Activated CD4-positive, alpha-beta T cell treated with anti-CD3 and anti-CD28 coated beads for 36 hours (primary cell): ENCODE measurements at regions of chr10 and their contacts with region 1.

Region 1: DNA sequence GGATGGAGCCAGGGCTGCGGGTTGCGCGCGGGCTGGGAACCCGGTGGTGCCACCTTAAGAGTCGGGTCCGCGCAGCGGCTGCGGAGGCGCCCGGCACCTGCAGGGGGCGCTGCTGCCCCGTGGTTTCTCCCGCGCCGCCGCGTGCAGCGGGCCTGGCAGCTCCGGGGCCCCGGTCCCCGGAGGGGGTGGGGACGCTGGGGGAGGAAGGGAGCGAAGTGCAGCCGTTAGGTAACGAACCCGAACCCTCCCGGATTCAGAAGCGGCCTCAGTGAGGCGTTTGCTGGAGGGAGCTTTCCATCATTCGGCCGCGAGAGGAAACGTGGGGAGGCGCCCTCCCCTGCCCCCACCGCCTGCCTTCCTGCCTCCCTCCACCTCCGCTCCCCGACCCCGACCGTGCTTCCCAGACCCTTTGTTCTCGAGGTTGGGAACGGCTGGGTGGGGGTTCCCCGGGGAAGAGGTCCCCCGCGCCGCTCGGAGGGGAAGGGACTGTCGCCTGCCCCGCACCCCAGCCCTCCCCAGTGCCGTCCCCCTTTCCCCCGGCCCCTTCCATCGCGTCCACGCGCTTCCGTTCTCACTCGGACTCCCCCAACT is 29.6 kb downstream of the SKIDA1 start:
- DNase-seq: peak; percentile 92
- ATAC-seq: peak; percentile 86
- H3K4me3 Mint-ChIP-seq: peak overlapping the region; percentile 76
- H3K27ac Mint-ChIP-seq: no peak overlapping the region
- H3K4me1 Mint-ChIP-seq: peaks cover 17% of the 10 kb centered on the region
- H3K27me3 Mint-ChIP-seq: peaks cover 47% of the 10 kb centered on the region

Region 2: DNA sequence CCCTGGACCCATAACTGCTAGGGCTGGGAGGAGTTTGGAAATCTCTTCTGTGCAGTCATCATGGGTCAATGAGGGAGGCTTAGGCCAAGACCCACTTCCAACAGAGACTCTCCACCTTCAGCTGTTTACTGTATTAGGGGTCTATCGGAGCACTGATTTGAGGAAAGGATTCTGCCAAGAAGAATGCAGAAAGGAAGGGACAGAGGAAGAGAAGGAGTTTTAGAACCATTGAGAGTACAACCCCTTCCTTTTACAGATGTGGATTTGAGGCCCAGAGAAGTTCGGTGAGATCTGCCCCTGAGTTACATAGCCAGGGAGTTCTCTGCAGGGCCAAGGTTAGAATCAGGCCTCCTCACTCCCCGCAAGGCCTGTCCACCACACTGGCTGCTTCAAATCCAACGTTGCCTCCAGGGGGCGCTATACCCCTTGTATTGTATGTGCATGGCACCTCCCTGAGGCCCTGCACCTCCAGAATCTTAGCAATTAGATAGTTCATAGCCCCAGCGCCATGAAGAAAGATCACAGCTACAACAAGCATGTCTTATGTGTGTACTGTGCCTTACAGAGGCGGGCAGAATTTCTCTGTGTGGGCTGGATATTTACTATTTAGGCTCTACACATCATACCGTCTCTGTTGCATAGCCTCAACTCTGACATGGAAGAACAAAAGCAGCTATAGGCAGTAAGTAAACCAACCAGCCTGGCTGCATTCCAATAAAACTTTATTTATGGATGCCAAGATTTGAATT is 217.2 kb before region 1 on chr10:
- CTCF ChIA-PET with region 1: no interaction called
- POLR2A ChIA-PET with region 1: no interaction called
- intact Hi-C with region 1: loop called (anchors 1 to 2 kb)
- DNase-seq: peak; percentile 92
- ATAC-seq: peak; percentile 92
- H3K4me3 Mint-ChIP-seq: no peak overlapping the region
- H3K27ac Mint-ChIP-seq: no peak overlapping the region
- H3K4me1 Mint-ChIP-seq: no peaks in the 10 kb centered on the region
- H3K27me3 Mint-ChIP-seq: peaks cover 2% of the 10 kb centered on the region

Region 3: DNA sequence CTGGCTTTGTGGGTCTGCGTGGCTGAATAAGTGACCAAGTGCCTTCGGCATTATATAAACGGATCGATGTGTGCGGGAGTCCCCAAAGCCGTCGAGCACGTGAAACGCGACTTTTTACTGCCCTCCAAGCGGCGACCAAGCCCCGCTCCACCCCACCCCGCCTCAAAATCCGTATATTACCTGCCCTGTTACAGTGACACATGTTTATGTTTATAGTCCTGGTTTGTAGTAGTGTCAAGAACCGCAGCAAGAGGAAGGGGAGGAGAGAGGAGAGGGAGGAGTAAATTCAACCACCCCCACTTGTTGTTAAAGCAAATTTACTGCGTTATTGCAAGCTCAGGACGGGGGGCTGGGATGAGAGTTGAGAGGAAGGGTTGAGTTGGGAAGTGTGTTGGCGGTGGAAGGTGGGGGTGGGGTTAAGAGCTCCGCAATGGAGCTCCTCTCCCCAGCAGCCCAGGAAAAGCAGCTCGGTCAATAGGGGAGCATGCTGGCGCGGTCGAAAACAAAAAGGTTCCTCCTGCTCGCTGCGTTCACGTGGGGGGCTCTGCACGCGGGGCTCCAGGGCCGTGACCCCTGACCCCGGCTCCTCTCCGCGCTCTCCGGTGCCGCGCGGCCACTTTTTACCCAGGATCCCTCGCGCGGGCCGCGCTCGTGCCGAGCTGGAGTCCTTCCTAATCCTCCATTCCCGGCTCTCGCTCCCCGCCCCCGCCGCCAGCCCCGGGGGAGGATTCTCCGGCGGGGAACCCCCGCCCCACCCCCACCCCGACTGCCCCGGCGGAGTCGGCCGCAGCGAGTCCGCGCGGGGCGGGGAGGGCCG is 29.7 kb after region 1 on chr10 and contains the start of gene SKIDA1:
- CTCF ChIA-PET with region 1: interaction called, 8 read pairs
- POLR2A ChIA-PET with region 1: interaction called, 5 read pairs
- intact Hi-C with region 1: loop called in 1 of 2 experiments (anchors 2 kb)
- DNase-seq: peak; percentile 81
- ATAC-seq: peak; percentile 71
- H3K4me3 Mint-ChIP-seq: peak within 1 kb of the TSS; percentile 80
- H3K27ac Mint-ChIP-seq: peak within 1 kb of the TSS; percentile 96
- H3K4me1 Mint-ChIP-seq: peaks cover 24% of the 10 kb centered on the region
- H3K27me3 Mint-ChIP-seq: peaks cover 17% of the 10 kb centered on the region
- total RNA-seq, gene SKIDA1: 0.32 to 0.54 TPM

Region 4: GRCh38 chr10:21675157-21675796 is 179.4 kb after region 1 on chr10:
- CTCF ChIA-PET with region 1: interaction called, 4 read pairs
- POLR2A ChIA-PET with region 1: no interaction called
- intact Hi-C with region 1: loop called in 1 of 2 experiments (anchors 2 kb)
- DNase-seq: peak; percentile 52
- ATAC-seq: peak; percentile 66
- H3K4me3 Mint-ChIP-seq: no peak overlapping the region
- H3K27ac Mint-ChIP-seq: no peak overlapping the region
- H3K4me1 Mint-ChIP-seq: peaks cover 1% of the 10 kb centered on the region
- H3K27me3 Mint-ChIP-seq: no peaks in the 10 kb centered on the region

Region 5: GRCh38 chr10:21831986-21832820 is 336.4 kb after region 1 on chr10:
- CTCF ChIA-PET with region 1: no interaction called
- POLR2A ChIA-PET with region 1: no interaction called
- intact Hi-C with region 1: no loop called
- DNase-seq: no peak
- ATAC-seq: no peak
- H3K4me3 Mint-ChIP-seq: no peak overlapping the region
- H3K27ac Mint-ChIP-seq: no peak overlapping the region
- H3K4me1 Mint-ChIP-seq: peaks cover 2% of the 10 kb centered on the region
- H3K27me3 Mint-ChIP-seq: no peaks in the 10 kb centered on the region

Region 6: DNA sequence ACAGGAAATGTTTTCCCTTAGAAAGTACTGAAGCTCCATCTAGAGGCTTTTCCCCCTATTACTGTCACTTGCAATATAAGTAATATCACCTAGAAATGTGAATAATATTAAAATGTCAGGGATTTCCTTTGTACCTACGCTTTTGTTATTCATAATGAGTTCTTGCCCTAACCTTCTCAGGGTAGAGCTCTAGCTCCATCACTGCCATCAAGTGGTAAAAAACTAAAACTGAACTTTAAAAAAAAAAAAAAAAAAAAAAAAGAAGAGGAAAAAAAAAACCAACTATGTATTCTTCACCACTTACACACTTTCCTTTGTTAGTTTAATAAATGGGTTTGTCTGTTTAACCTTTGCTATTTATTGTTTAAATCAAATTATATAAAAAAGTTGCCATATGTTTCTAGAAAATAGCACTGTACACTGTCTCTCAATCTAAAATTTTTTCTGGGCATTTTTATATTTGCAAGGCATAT is 457.8 kb after region 1 on chr10:
- CTCF ChIA-PET with region 1: interaction called, 6 read pairs
- POLR2A ChIA-PET with region 1: no interaction called
- intact Hi-C with region 1: loop called (anchors 1 kb)
- DNase-seq: no peak
- ATAC-seq: peak; percentile 98
- H3K4me3 Mint-ChIP-seq: no peak overlapping the region
- H3K27ac Mint-ChIP-seq: no peak overlapping the region
- H3K4me1 Mint-ChIP-seq: peaks cover 7% of the 10 kb centered on the region
- H3K27me3 Mint-ChIP-seq: no peaks in the 10 kb centered on the region

Region 7: GRCh38 chr10:22244001-22244400 is 748.2 kb after region 1 on chr10:
- CTCF ChIA-PET with region 1: no interaction called
- POLR2A ChIA-PET with region 1: no interaction called
- intact Hi-C with region 1: loop called in 1 of 2 experiments (anchors 10 kb)
- DNase-seq: peak; percentile 27
- ATAC-seq: no peak
- H3K4me3 Mint-ChIP-seq: no peak overlapping the region
- H3K27ac Mint-ChIP-seq: no peak overlapping the region
- H3K4me1 Mint-ChIP-seq: peaks cover 43% of the 10 kb centered on the region
- H3K27me3 Mint-ChIP-seq: peaks cover 3% of the 10 kb centered on the region

Region 8: GRCh38 chr10:22648547-22648961 is 1152.7 kb after region 1 on chr10:
- CTCF ChIA-PET with region 1: no interaction called
- POLR2A ChIA-PET with region 1: no interaction called
- intact Hi-C with region 1: no loop called
- DNase-seq: no peak
- ATAC-seq: peak; percentile 8
- H3K4me3 Mint-ChIP-seq: peak overlapping the region; percentile 49
- H3K27ac Mint-ChIP-seq: peak overlapping the region; percentile 93
- H3K4me1 Mint-ChIP-seq: peaks cover 90% of the 10 kb centered on the region
- H3K27me3 Mint-ChIP-seq: no peaks in the 10 kb centered on the region

Region 9: GRCh38 chr10:23095404-23095965 is 1599.6 kb after region 1 on chr10 and contains the start of gene MSRB2:
- CTCF ChIA-PET with region 1: no interaction called
- POLR2A ChIA-PET with region 1: no interaction called
- intact Hi-C with region 1: loop called in 1 of 2 experiments (anchors 10 kb)
- DNase-seq: peak; percentile 84
- ATAC-seq: peak; percentile 58
- H3K4me3 Mint-ChIP-seq: peak within 1 kb of the TSS; percentile 95
- H3K27ac Mint-ChIP-seq: peak within 1 kb of the TSS; percentile 92
- H3K4me1 Mint-ChIP-seq: peaks cover 39% of the 10 kb centered on the region
- H3K27me3 Mint-ChIP-seq: no peaks in the 10 kb centered on the region
- total RNA-seq, gene MSRB2: 8.2 to 9.0 TPM